Breast epithelium (tissue), 4 donors: ENCODE measurements at regions of chr1 and their contacts with region 1.

Region 1: GRCh38 chr1:18419845-18420184 is 60.9 kb upstream of the KLHDC7A start:
- DNase-seq: no peak
- H3K4me3 ChIP-seq: no peak overlapping the region
- H3K27ac ChIP-seq: no peak overlapping the region
- H3K4me1 ChIP-seq: no peaks in the 10 kb centered on the region
- H3K27me3 ChIP-seq: no peaks in the 10 kb centered on the region
- CTCF ChIP-seq: no peak
- POLR2A ChIP-seq: no peak

Region 2: DNA sequence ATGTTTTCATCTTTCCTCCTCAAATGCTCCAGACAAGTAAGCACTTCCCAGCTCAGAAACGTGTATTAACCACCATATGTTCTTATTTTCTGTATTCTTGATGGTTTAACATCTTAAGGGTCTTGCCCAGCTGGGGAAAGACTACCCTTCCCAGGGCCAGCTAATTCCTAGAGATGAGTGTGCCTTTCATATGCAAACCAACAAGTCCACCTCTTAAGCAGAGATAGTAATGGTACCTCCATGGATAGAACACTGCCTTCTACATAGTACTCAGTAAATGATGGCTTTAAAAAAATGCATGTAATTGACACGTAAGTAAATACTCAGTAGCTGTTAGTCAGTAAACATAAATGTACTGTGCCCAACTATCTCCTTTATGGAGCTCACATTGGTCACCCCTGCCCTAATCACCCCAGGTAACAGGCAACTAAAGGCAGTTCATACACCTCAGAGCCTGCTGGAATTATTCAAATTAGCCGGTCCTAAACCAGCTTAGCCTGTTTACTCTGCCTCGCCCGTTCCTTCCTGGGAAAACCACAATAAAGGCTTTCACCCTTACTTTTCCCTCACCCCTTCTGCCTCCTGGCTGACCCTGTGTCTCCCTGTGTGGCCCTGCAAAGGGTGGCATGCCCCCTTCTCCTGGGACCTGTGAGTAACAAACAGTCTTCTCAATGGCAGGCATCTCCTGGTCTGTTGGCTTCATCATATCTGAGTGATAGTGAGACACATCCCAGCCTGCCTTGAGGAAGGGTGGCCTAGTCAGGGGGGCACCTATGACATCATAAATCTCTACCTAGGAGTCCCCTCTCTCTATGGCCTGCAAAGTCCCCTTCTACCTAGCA is 20.8 kb after region 1 on chr1:
- intact Hi-C with region 1: loop called (anchors 1 kb)
- DNase-seq: no peak
- H3K4me3 ChIP-seq: no peak overlapping the region
- H3K27ac ChIP-seq: no peak overlapping the region
- H3K4me1 ChIP-seq: no peaks in the 10 kb centered on the region
- H3K27me3 ChIP-seq: peaks cover 0 to 3% of the 10 kb centered on the region in 2 donors
- CTCF ChIP-seq: no peak
- POLR2A ChIP-seq: no peak

Region 3: DNA sequence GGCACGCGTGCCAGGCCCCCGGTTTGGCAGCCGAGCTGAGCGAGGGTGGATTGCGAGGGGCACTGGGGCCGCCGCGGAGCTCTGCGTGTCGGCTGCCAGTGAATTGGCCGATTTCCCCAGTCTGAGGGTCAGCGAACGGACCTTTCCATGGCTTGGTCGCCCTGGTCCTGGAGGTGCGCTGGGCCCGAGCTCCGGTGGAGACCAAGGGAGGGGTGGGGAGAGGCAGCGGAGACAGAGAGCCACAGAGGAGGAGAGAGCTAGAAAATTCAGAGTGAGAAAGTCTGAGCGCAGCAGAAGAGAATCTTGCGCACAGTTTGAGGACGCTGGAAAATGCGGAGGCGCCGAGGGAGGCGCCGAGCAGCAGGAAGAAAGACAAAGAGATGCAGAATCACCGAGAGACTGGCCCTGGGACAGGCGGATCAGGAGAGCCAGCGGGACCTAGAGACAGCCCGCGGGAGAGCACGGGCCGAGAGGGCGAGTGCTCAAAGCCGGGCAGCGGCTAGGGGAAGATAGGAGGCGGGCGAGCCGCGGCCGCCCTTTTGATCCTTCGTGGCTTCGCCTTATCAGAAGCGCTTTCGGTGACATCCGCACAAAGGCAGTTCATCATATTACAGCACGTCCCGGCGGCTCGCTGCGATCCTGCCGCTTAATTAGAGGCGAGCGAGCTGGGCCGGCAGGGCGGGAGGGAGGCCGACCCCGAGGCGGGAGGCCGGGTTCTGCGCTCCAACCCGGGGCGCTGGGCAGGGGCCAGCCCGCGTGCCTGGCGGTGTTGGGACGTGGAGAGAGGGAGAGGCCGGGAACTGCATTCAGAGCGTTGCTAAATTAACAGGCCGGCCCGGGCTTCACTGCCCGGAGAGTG is 223.6 kb after region 1 on chr1:
- intact Hi-C with region 1: no loop called
- DNase-seq: no peak
- H3K4me3 ChIP-seq: peak overlapping the region in 1 of 3 donors; percentile 29
- H3K27ac ChIP-seq: no peak overlapping the region
- H3K4me1 ChIP-seq: peaks cover 0 to 14% of the 10 kb centered on the region in 2 donors
- H3K27me3 ChIP-seq: peaks cover 9 to 100% of the 10 kb centered on the region in 2 donors
- CTCF ChIP-seq: no peak
- POLR2A ChIP-seq: no peak